Endothelial cell of umbilical vein (primary cell): ENCODE measurements at regions of chr11 and their contacts with region 1.

Region 1: DNA sequence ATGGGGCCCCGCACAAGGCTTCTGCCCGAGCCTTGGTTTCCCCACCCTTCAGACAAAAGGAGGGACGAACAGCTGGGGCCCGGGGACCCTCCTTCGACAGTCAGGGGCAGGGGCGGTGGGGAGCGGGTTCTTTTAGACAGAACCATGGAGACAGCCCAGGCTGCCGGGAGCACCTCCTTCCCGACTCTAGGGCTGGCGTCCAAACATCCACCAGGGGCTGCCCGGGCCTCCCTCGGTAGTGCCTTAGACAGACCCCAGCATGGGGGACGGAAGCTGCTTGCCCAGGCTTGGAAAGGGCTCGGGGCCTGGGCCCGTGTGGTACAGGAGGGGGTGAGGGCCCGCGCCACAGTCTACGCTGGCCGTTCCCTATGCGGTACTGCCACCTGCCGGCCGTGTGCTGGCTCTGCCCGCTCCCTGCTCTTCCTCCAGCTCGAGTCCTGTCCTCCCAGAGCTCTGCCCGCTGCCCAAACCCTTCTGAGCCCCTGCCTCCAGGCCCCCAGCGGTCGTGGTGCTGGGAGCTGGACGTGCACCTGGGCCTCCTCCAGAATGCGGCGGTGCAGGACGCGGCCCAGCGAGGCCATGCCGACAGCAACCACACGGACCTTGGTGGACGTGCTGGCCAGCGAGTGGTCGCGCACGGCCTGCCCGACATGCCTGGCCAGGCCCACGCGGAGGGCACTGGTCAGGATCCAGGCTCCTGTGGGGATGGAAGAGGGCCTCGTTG is 20.1 kb downstream of the TSSC4 start:
- DNase-seq: peak; percentile 59
- H3K4me3 ChIP-seq: no peak overlapping the region
- H3K27ac ChIP-seq: no peak overlapping the region
- H3K4me1 ChIP-seq: no peaks in the 10 kb centered on the region
- H3K27me3 ChIP-seq: no peaks in the 10 kb centered on the region
- CTCF ChIP-seq: peak; percentile 88 to 97
- POLR2A ChIP-seq: no peak

Region 2: GRCh38 chr11:2186669-2187279 is 233.9 kb before region 1 on chr11:
- CTCF ChIA-PET with region 1: interaction called, 43 read pairs
- POLR2A ChIA-PET with region 1: no interaction called
- dilution Hi-C with region 1: no loop called
- intact Hi-C with region 1: no loop called
- DNase-seq: peak; percentile 11
- H3K4me3 ChIP-seq: no peak overlapping the region
- H3K27ac ChIP-seq: no peak overlapping the region
- H3K4me1 ChIP-seq: no peaks in the 10 kb centered on the region
- H3K27me3 ChIP-seq: peaks cover 0 to 6% of the 10 kb centered on the region in 2 experiments
- CTCF ChIP-seq: peak; percentile 6 to 49
- POLR2A ChIP-seq: no peak

Region 3: GRCh38 chr11:2298795-2299761 is 121.6 kb before region 1 on chr11:
- CTCF ChIA-PET with region 1: interaction called, 829 read pairs
- POLR2A ChIA-PET with region 1: no interaction called
- dilution Hi-C with region 1: no loop called
- intact Hi-C with region 1: no loop called
- DNase-seq: no peak
- H3K4me3 ChIP-seq: no peak overlapping the region
- H3K27ac ChIP-seq: no peak overlapping the region
- H3K4me1 ChIP-seq: no peaks in the 10 kb centered on the region
- H3K27me3 ChIP-seq: no peaks in the 10 kb centered on the region
- CTCF ChIP-seq: no peak
- POLR2A ChIP-seq: no peak

Region 4: DNA sequence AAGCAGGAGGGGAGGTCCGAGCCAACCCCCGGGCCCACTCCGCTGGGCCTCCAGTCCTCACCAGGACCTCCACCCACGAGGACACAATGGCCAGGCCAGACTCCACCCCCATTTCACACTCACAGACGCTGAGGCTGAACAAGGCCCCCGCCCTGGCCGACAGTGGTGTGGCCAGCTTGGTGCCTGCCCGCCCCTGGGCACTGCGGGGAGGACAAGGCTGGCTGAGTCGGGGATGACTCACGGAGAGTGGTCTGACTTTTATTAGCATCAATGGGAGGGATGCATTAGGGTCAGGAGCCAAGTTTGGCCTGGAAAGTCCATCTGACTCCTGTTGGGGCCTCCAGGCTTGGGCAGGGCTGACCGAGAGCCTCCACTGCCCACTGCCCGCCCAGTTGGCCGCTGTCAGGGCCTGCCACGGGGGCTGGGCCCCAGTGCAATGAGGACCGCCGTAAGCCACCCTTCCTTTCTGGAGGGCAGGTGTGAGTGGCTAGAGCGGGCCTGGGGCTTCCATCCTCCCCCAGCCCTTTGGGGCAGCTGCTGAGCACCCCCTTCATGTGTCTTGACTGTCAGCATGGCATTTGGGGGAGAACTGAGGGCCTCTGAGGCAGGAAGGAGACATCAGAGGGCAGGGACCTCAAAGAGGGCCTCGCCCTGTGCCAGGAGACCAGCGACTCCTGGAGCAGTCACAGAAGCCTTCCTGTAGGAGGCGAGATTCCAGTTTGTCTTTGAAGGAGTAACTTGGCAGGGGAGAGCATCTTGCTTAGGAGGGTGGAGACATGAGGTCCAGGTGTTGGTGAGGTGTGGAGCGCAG is 108.2 kb before region 1 on chr11:
- CTCF ChIA-PET with region 1: interaction called, 829 read pairs
- POLR2A ChIA-PET with region 1: no interaction called
- dilution Hi-C with region 1: no loop called
- intact Hi-C with region 1: no loop called
- DNase-seq: no peak
- H3K4me3 ChIP-seq: no peak overlapping the region
- H3K27ac ChIP-seq: no peak overlapping the region
- H3K4me1 ChIP-seq: no peaks in the 10 kb centered on the region
- H3K27me3 ChIP-seq: no peaks in the 10 kb centered on the region
- CTCF ChIP-seq: no peak
- POLR2A ChIP-seq: no peak

Region 5: DNA sequence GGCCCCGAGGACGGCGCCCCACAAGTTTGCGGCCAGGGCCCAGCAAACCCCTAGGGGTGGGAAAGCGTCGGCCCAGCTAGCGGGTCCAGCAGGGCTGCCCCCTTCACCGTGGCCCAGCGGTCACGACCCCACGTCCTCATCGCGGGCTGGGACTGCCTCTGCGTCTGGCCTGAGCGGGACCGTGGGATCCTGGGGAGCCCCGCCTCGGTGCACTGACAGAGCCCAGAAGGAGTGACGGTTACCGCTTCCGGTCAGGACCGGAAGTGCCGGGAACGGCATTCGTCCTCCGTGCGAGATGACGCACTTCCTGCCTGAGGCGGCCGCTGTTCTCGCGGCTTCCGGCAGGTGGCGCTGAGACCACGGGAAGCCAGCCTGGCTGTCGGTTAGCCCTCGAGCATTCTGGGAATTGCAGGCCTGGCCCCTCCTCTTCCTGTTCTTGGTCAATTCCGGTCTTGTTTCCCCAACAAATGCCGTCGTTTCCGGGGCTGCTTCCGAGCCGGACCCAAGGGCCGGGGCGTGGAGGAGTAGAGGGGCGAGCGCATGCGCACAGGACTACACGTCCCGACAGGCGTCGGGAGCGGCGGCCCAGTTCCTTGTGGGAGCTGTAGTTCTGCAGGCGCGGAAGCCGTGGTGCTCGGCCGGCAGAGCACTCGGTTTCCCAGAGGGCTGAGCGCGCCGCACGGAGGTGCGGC is 20.4 kb before region 1 on chr11 and contains the start of gene TSSC4:
- CTCF ChIA-PET with region 1: interaction called, 25 read pairs
- POLR2A ChIA-PET with region 1: no interaction called
- dilution Hi-C with region 1: no loop called
- intact Hi-C with region 1: loop called (anchors 1 kb)
- DNase-seq: peak; percentile 100
- H3K4me3 ChIP-seq: peak within 1 kb of the TSS; percentile 56 to 86 (median 81)
- H3K27ac ChIP-seq: peak within 1 kb of the TSS; percentile 99
- H3K4me1 ChIP-seq: peaks cover 18% of the 10 kb centered on the region
- H3K27me3 ChIP-seq: no peaks in the 10 kb centered on the region
- CTCF ChIP-seq: peak; percentile 99
- POLR2A ChIP-seq: peak; percentile 96
- total RNA-seq, gene TSSC4: 59.6 and 61.9 TPM in 2 replicates

Region 6: DNA sequence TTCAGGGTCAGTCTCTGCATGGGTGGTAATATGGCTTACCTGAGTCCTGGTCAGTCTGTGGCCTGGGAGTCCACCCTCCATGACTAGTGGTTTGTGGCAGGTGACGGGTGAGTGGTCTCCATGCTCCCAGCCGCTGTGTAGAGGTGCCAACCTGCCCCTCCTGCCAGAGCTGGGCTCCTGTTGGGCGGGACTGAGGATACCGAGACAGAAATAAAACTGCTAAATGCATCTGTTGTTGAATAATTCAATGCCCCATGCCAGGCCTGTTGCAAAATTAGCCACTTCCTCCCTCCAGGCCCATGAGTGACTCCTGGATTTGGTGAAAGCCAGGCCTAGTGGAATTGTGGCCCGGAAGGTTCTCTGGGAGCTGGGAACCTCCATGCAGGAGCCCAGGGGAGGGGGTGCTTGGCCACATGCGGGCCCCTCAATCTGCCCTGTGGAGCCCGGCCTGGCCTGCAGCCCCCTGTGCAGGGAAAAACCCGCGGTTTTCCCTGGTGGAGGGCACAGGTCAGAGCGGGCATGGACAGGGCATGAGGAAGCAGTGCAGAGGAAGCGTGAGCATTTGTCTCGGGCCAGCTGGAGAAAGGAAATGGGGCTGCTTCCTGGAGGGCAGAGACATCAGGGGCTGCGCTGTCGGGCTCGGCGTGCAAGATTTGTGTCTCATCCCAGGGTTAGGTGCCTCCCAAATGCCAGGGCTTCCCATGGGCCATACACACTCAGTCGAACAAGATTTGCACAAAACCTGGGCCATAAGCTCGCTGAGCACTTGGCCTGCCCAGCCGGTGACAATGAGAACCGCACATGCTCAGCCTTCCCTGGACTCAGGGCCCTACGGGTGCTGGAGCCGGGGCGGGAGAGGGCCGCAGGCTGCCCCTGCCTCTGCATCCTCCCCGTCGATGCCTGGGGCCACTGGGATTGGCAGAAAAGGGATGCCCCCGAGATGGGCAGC is 91.0 kb after region 1 on chr11:
- CTCF ChIA-PET with region 1: no interaction called
- POLR2A ChIA-PET with region 1: no interaction called
- dilution Hi-C with region 1: no loop called
- intact Hi-C with region 1: no loop called
- DNase-seq: no peak
- H3K4me3 ChIP-seq: no peak overlapping the region
- H3K27ac ChIP-seq: no peak overlapping the region
- H3K4me1 ChIP-seq: no peaks in the 10 kb centered on the region
- H3K27me3 ChIP-seq: peaks cover 0 to 2% of the 10 kb centered on the region in 2 experiments
- CTCF ChIP-seq: no peak
- POLR2A ChIP-seq: no peak